ENCODE measurements at regions of chrX and their contacts with region 1.

Region 1: DNA sequence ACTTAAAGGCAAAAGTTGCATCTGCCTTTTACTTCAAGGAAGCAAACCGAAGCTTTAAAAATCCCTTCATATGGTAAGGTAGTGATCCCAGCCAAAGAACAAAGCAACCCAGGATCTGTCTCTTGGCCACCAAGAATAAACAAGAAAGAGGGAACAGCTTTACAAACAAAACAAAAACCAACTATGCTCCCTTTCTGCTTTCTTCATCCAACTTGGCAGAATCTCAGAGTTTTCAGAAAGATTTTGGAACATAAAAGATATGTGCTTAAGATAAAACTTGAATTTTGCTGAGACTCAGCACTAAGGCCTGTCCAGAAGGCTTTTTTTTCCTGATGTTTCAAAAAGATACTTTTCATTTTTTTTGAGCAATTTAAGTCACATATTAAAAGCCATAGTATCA is 94.0 kb downstream of the COL4A6 start:
- DNase-seq: no peak
- ATAC-seq: no peak
- H3K4me3 ChIP-seq: no peak overlapping the region
- H3K27ac ChIP-seq: peak overlapping the region; percentile 31
- H3K4me1 ChIP-seq: peaks cover 14% of the 10 kb centered on the region; the same call in 1 of the 2 replicates
- H3K27me3 ChIP-seq: no peaks in the 10 kb centered on the region
- CTCF ChIP-seq: no peak

Region 2: DNA sequence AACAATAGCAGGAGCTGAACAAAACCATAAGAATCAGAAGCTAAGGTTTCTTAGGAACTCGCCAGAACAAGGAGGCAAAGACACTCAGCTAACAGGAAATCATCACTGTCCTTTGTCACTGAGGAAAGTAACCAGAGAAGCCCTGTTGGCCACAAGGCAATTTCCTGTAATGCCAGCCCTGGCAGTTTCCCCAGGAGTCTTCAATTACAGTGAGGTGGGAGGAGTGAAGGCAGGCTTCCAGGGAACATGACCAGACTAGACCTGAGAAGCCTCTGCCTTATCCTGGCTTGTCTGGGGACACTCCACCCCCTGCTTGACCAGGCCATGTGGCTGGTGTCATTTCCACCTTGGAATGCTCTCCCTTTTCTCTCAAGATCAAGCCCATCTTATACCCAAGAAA is 31.3 kb before region 1 on chrX:
- CTCF ChIA-PET with region 1: no interaction called
- POLR2A ChIA-PET with region 1: no interaction called
- intact Hi-C with region 1: loop called (anchors 2 kb)
- DNase-seq: peak; percentile 94
- ATAC-seq: peak; percentile 80
- H3K4me3 ChIP-seq: no peak overlapping the region
- H3K27ac ChIP-seq: peak overlapping the region; percentile 98
- H3K4me1 ChIP-seq: peaks cover 65% of the 10 kb centered on the region
- H3K27me3 ChIP-seq: no peaks in the 10 kb centered on the region
- CTCF ChIP-seq: no peak

Region 3: DNA sequence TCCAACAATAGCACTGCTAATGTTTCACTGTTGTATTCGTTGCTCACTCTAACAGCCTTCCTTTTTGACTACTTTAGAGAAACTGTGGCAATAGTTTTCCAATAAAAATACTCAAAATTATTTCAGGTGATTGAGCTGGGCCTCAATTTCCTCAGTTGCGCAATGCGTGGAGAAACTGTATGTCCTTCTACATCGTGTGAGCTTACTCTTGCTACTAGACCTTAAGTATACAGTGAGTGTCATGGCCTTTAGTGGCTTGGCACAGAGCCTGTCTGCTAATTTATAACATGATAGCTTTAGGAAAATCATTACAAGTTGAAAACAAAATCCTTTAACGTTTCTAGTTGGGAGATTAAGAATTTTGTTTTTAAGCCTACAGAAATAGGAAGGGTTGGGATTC is 20.5 kb before region 1 on chrX:
- CTCF ChIA-PET with region 1: no interaction called
- POLR2A ChIA-PET with region 1: no interaction called
- intact Hi-C with region 1: no loop called
- DNase-seq: no peak
- ATAC-seq: no peak
- H3K4me3 ChIP-seq: no peak overlapping the region
- H3K27ac ChIP-seq: no peak overlapping the region
- H3K4me1 ChIP-seq: no peaks in the 10 kb centered on the region
- H3K27me3 ChIP-seq: no peaks in the 10 kb centered on the region
- CTCF ChIP-seq: no peak

Region 4: DNA sequence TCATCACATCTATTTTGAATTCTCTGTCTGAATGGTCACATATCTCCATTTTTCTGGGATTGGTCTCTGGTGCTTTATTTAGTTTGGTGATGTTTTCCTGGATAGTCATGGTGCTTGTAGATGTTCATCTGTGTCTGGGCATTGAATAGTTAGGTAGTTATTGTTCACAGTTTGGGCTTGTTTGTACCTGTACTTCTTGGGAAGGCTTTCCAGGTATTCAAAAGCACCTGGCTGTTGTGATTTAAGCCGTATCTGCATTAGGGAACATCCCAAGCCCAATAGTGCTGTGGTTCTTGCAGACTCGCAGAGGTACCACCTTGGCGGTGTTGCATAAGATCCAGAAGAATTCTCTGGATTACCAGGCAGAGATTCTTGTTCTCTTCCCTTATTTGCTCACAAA is 140.0 kb after region 1 on chrX:
- CTCF ChIA-PET with region 1: no interaction called
- POLR2A ChIA-PET with region 1: no interaction called
- intact Hi-C with region 1: no loop called
- DNase-seq: no peak
- ATAC-seq: no peak
- H3K4me3 ChIP-seq: no peak overlapping the region
- H3K27ac ChIP-seq: no peak overlapping the region
- H3K4me1 ChIP-seq: no peaks in the 10 kb centered on the region
- H3K27me3 ChIP-seq: no peaks in the 10 kb centered on the region
- CTCF ChIP-seq: no peak

Measured in PC-3 (cell line).